ENCODE measurements at regions of chr21 and their contacts with region 1.

Region 1: DNA sequence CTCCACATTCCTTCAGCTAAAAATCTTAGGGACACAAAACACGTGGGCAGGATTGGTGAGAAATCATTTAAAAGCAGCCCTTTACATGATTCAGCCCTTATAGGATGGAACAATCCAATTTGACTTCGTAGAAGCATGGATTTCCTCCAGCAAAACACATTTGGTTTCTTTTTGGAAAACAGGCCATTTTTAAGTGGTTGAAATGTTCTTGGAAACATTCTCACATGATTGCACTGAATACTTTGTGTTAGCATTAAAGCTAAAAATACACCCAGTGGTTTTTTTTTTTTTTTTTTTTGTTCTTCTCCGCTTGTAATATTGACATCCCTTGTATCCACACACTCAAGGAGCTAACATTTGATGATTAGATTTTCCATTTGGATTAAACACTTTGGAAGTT is 42.1 kb upstream of the ABCG1 start:
- DNase-seq: no peak
- ATAC-seq: no peak
- H3K4me3 ChIP-seq: no peak overlapping the region
- H3K27ac ChIP-seq: no peak overlapping the region
- H3K4me1 ChIP-seq: no peaks in the 10 kb centered on the region
- H3K27me3 ChIP-seq: no peaks in the 10 kb centered on the region
- CTCF ChIP-seq: no peak
- EP300 ChIP-seq: no peak
- POLR2A ChIP-seq: no peak
- RAD21 ChIP-seq: no peak

Region 2: GRCh38 chr21:42113926-42114686 is 62.8 kb before region 1 on chr21:
- CTCF ChIA-PET with region 1: no interaction called
- POLR2A ChIA-PET with region 1: no interaction called
- RAD21 ChIA-PET with region 1: no interaction called
- SMC1A ChIA-PET with region 1: no interaction called
- in situ Hi-C with region 1: no loop called
- intact Hi-C with region 1: no loop called
- DNase-seq: no peak
- ATAC-seq: no peak
- H3K4me3 ChIP-seq: no peak overlapping the region
- H3K27ac ChIP-seq: no peak overlapping the region
- H3K4me1 ChIP-seq: peaks cover 21% of the 10 kb centered on the region
- H3K27me3 ChIP-seq: peaks cover 0 to 2% of the 10 kb centered on the region in 2 experiments; a peak in 2 of 4 replicates
- CTCF ChIP-seq: no peak
- EP300 ChIP-seq: no peak
- POLR2A ChIP-seq: no peak
- RAD21 ChIP-seq: no peak

Region 3: DNA sequence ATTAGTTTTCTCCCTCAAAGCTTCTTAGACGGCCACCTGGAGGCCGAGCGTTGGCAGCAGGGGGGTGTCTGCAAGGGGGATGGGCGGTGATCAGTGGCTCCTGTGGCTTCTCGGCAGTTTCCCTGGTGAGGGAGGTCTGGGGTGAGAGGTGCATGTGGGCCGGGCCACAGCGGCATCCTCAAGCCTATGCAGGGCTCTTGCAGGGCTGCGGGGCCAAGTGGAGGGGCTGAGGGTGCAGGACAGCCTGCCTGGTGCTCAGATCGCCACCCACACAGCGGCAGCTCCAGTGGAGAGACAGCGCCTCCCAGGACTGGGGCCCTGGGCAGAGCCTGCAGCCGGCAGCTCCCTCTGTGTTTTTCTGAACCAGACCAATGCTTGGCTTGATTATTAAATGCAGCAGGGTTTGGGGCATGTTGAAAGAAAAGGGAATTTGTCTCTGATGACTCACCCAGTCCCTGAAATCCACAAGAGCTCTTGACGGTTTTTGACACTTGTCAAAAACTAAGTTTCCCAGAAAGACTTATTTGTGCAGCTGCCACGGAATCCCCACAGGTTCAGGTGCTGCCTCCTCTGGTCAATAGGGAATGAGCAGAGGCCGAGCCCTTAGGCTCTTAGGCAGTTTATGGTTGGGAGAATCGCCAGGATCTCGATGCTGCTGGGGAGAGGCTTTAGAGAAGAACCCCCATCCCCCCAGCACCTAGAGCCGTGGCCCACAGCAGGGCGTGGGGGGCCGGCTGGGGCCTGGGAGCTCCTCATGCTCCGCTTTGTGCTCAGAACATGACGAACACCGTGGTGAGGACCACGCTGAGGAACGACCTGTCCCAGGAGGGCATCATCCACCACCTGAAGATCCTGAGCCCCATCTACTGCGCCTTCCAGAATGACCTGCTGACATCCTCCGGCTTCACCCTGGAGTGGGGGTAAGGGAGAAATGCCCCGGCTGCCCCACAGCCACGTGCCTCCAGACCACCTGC is 51.0 kb before region 1 on chr21:
- CTCF ChIA-PET with region 1: no interaction called
- POLR2A ChIA-PET with region 1: no interaction called
- RAD21 ChIA-PET with region 1: no interaction called
- SMC1A ChIA-PET with region 1: no interaction called
- in situ Hi-C with region 1: loop called (anchors 5 kb)
- intact Hi-C with region 1: no loop called
- DNase-seq: no peak
- ATAC-seq: peak; percentile 45
- H3K4me3 ChIP-seq: no peak overlapping the region
- H3K27ac ChIP-seq: no peak overlapping the region
- H3K4me1 ChIP-seq: peaks cover 15% of the 10 kb centered on the region
- H3K27me3 ChIP-seq: no peaks in the 10 kb centered on the region
- CTCF ChIP-seq: no peak
- EP300 ChIP-seq: no peak
- POLR2A ChIP-seq: no peak
- RAD21 ChIP-seq: no peak